ENCODE measurements at regions of chr19 and their contacts with region 1.

Region 1: GRCh38 chr19:33778089-33778791 is 18.4 kb upstream of the KCTD15 start:
- DNase-seq: peak; percentile 60 to 92 (median 77)
- H3K4me3 ChIP-seq: peak overlapping the region in 53 of 59 donors; percentile 14 to 60 (median 45)
- H3K27ac ChIP-seq: no peak overlapping the region
- H3K27me3 ChIP-seq: peaks cover 0 to 24% (median 0%) of the 10 kb centered on the region in 45 donors
- CTCF ChIP-seq: peak; percentile 91 to 100 (median 100)

Region 2: DNA sequence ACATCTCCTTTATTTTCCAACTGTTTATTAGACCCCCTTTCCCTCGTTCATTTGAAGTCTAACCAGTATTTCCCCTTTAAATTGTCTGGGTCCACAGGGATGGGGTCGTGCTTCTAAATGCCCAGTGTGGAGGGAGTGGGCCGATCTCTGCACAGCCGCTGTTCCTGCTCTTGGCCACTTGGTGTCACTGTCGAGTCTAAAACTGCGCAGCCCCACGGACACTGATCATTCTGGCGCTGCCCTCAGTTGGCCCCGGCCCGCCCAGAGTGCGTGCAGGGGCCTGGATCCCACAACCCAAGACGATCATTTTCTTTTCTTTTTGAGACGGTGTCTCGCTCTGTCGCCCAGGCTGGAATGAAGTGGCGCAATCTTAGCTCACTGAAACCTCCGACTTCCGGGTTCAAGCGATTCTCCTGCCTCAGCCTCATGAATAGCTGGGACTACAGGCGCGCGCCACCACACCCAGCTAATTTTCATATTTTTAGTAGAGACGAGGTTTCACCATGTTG is 634.3 kb before region 1 on chr19:
- intact Hi-C with region 1: loop called in 1 of 2 experiments (anchors 5 kb)
- DNase-seq: peak; percentile 34 to 75 (median 54)
- H3K4me3 ChIP-seq: peak overlapping the region in 20 of 59 donors; percentile 4 to 53 (median 20)
- H3K27ac ChIP-seq: no peak overlapping the region
- H3K27me3 ChIP-seq: peaks cover 0 to 2% (median 0%) of the 10 kb centered on the region in 45 donors
- CTCF ChIP-seq: peak; percentile 71 to 96 (median 92)

Region 3: DNA sequence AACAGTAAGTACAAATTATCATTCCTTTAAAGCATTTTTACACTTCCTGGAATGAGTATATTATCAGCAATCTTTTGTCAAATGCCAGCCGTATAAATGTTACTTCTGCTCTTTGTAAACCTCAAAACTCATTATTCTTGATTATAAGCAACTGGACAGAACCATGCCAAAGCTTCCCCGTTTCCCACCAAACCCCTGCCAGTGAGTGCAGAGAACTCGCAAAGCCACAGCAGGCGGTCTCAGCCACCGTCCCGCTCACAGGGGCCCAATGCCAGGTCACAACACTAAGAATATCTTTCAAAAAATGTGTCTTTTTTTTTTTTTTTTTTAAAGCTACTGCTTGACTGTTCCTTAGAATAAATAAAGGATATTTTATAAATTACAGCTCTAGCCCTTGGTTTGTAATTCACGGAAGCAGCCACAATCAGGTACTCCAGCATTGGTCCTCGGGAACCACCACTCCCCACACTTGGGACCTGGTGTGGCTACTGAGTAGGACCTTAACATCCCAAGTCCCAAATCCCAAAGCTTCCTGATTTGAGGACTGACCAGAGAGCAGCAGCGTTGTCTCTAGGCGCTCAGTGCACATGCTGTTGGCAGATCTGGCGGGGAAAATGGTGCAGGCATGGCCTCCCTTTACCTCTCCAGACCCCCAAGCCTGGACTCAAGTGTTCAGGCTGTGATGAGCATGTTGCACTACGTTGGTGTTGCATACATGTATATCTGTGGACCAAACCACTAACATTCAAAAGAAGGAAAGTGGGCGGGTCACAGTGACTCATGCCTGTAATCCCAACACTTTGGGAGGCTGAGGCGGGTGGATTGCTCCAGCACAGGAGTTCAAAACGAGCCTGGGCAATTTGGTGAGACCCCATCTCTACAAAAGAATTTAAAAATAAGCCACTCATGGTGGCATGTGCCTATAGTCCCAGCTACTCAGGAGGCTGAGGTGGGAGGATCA is 37.4 kb after region 1 on chr19:
- intact Hi-C with region 1: no loop called
- DNase-seq: peak in 2 of 10 donors; percentile 23 to 42
- H3K4me3 ChIP-seq: no peak overlapping the region
- H3K27ac ChIP-seq: peak overlapping the region in 25 of 59 donors; percentile 1 to 74 (median 36)
- H3K27me3 ChIP-seq: peaks cover 0 to 15% (median 0%) of the 10 kb centered on the region in 45 donors
- CTCF ChIP-seq: no peak

Region 4: GRCh38 chr19:33998739-33999345 is 220.6 kb after region 1 on chr19:
- intact Hi-C with region 1: loop called (anchors 5 to 10 kb)
- DNase-seq: no peak
- H3K4me3 ChIP-seq: peak overlapping the region in 18 of 59 donors; percentile 2 to 34 (median 16)
- H3K27ac ChIP-seq: no peak overlapping the region
- H3K27me3 ChIP-seq: peaks cover 0 to 13% (median 0%) of the 10 kb centered on the region in 45 donors
- CTCF ChIP-seq: peak in 55 of 56 donors; percentile 27 to 75 (median 51)

Region 5: GRCh38 chr19:34096020-34096915 is 318.0 kb after region 1 on chr19:
- intact Hi-C with region 1: loop called (anchors 2 to 5 kb)
- DNase-seq: peak in 2 of 10 donors; percentile 15 to 36
- H3K4me3 ChIP-seq: peak overlapping the region in 43 of 59 donors; percentile 3 to 52 (median 33)
- H3K27ac ChIP-seq: no peak overlapping the region
- H3K27me3 ChIP-seq: no peaks in the 10 kb centered on the region
- CTCF ChIP-seq: peak; percentile 50 to 88 (median 70)

Region 6: DNA sequence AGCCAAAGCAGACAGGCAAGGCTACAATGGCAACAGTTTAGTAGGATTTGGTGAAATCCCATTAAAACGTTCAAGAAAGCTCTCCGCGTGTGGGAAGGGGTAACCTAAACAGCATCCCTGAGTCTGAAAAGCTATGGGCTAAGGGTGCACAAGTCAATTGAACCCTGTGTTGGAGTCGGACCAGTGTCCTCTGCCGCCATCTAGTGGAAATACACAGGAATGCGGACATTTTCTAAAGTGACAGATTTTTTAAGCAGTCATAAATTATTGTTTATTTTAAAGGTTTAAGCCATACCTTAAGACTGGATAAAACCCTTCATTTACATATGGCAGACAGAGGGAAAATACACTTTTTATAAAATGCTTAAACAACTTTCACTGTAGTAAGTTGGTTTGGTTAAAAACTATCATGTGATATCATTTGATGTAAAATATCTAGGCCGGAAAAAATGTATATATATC is 367.5 kb after region 1 on chr19:
- intact Hi-C with region 1: loop called (anchors 5 kb)
- DNase-seq: peak in 5 of 10 donors; percentile 25 to 57 (median 42)
- H3K4me3 ChIP-seq: no peak overlapping the region
- H3K27ac ChIP-seq: no peak overlapping the region
- H3K27me3 ChIP-seq: no peaks in the 10 kb centered on the region
- CTCF ChIP-seq: peak; percentile 63 to 93 (median 80)

Region 7: GRCh38 chr19:34188408-34188807 is 410.2 kb after region 1 on chr19:
- intact Hi-C with region 1: no loop called
- DNase-seq: no peak
- H3K4me3 ChIP-seq: no peak overlapping the region
- H3K27ac ChIP-seq: no peak overlapping the region
- H3K27me3 ChIP-seq: no peaks in the 10 kb centered on the region
- CTCF ChIP-seq: no peak

Measured in dorsolateral prefrontal cortex (tissue), 120 donors.